ENCODE measurements at regions of chr7 and their contacts with region 1.

Region 1: GRCh38 chr7:106947244-106947728 is 82.2 kb downstream of the PIK3CG start:
- DNase-seq: peak; percentile 79
- H3K4me3 ChIP-seq: no peak overlapping the region
- H3K27ac ChIP-seq: no peak overlapping the region
- H3K4me1 ChIP-seq: no peaks in the 10 kb centered on the region
- H3K27me3 ChIP-seq: peaks cover 9% of the 10 kb centered on the region
- CTCF ChIP-seq: peak; percentile 72

Region 2: GRCh38 chr7:106216517-106216922 is 730.8 kb before region 1 on chr7:
- CTCF ChIA-PET with region 1: no interaction called
- POLR2A ChIA-PET with region 1: no interaction called
- intact Hi-C with region 1: no loop called
- DNase-seq: peak; percentile 84
- H3K4me3 ChIP-seq: no peak overlapping the region
- H3K27ac ChIP-seq: no peak overlapping the region
- H3K4me1 ChIP-seq: peaks cover 8% of the 10 kb centered on the region
- H3K27me3 ChIP-seq: no peaks in the 10 kb centered on the region
- CTCF ChIP-seq: no peak

Region 3: DNA sequence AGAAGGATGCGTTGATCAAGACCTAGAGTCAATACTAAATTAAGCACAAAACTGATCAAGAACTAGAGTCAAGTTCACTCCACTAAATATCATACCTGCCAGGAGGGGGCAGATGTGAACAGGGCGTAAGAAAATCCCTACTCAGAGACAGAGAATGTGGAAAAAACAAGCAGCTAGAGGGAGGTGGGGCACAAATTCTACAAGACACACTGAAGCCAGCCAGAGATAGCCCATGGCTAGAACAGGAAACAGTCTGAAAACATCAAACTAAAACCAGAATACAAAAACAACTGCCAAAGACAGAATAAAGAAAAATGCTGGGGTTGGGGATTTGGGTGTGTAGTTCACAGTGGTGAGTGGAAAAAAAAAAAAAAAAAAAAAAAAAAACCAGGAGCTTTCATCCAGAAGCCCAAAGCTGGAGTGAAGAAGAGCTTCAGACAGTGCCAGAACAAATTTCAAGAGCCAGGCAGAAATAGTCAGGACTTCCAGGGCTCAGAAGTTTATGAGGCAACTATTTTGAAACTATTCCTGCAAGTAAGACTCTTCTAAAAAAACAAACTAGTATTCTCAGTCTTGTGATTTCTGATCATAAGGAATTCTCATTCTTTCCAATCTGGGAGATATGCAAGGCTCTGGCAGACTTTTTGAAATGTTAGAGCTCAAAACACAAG is 404.6 kb before region 1 on chr7:
- CTCF ChIA-PET with region 1: interaction called, 13 read pairs
- POLR2A ChIA-PET with region 1: no interaction called
- intact Hi-C with region 1: no loop called
- DNase-seq: peak; percentile 79
- H3K4me3 ChIP-seq: no peak overlapping the region
- H3K27ac ChIP-seq: no peak overlapping the region
- H3K4me1 ChIP-seq: no peaks in the 10 kb centered on the region
- H3K27me3 ChIP-seq: no peaks in the 10 kb centered on the region
- CTCF ChIP-seq: peak; percentile 80

Region 4: DNA sequence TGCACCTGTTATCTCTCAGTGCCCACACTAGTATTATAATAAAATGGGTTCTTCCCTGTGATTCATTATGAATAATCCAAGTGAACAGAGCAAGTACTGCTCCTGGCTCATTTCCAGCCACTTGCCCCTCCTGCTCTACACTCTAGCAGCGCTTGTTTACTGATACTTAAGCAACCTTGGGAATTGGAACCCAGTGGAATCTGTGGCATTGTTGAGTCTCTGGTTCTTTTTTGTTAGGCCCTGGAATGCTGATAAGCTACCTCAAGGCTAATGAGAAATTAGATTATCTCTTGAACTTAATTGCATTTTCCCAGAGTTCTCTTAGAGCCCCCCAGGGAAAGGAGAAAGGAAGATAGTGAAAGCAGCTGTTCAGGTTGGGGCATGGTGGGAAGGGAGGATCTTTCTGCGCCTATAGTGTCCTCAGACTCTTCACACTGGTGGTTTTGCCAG is 131.3 kb after region 1 on chr7:
- CTCF ChIA-PET with region 1: no interaction called
- POLR2A ChIA-PET with region 1: no interaction called
- intact Hi-C with region 1: loop called (anchors 10 kb)
- DNase-seq: peak; percentile 4
- H3K4me3 ChIP-seq: no peak overlapping the region
- H3K27ac ChIP-seq: no peak overlapping the region
- H3K4me1 ChIP-seq: no peaks in the 10 kb centered on the region
- H3K27me3 ChIP-seq: no peaks in the 10 kb centered on the region
- CTCF ChIP-seq: no peak

Region 5: DNA sequence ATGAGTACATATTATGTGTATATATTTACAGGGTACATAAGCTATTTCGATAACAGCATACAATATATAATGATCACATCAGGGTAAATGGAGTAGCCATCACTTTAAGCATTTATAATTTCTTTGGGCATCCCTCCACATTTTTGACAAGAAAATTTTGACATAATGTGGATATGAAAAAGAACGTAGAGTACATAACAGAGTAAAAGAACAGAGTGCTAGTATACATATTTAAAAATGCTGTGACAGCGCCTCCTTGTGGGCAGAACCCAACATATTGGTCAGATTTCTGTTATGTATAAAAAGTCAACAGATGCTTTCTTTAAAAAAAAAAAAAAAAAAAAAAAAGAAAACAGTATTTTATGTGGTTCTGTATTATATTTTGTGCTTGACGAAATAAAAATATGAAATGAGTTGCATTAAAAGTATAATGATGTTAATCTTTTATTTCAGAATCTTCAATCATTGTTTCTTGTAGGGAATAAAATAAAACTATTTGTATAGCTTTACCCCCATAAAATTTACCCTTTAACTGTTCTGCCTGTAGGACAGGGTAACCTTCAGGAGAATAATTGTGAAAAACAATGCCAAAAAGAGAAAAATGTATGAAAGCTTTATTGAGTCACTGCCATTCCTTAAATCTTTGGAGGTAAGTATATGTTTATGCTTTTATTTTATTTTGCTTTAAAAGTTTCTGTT is 203.2 kb after region 1 on chr7:
- CTCF ChIA-PET with region 1: interaction called, 17 read pairs
- POLR2A ChIA-PET with region 1: no interaction called
- intact Hi-C with region 1: loop called (anchors 1 kb)
- DNase-seq: peak; percentile 67
- H3K4me3 ChIP-seq: no peak overlapping the region
- H3K27ac ChIP-seq: no peak overlapping the region
- H3K4me1 ChIP-seq: no peaks in the 10 kb centered on the region
- H3K27me3 ChIP-seq: no peaks in the 10 kb centered on the region
- CTCF ChIP-seq: peak; percentile 73